Heart left ventricle (tissue), 16 donors: ENCODE measurements at regions of chr13 and their contacts with region 1.

Region 1: DNA sequence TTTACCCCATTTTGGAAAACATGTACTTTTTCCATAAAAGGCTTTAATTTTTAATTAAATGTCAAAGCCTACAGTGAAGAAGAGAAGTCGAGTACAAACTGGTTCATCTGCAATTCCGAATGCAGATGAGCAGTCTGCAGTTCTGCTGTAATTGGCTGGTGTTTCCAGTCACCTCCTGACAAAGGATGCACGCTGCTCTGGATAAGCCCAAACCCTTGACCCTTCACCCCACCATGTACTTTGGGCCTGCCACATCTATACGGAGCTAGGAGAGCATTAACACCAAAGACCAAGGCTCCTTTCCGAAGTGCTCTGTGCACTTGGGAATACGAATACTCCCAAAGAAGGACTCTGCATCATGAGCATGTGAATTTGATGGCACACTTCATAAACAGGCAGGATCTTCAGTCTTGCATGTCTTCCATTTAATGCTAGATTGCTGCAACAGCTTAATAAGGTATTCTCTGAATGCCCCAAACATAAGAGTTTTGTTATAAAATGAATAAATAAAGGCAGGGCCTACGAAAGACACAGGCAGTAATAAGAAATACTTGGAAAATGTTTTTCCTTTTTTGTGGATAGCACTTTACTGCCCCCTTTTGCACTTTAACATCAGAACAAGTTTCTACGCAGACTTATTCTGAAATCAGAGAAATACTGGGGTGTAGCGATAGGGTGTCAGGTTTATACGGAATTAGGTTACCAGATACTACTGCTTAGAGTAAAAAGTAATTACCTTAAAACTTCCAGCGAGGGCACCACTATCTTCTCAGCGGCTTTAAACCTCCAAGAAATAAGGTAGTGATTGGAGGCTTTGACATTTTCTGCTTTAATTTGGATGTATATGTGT is 15.0 kb downstream of the EFNB2 start:
- DNase-seq: no peak
- ATAC-seq: no peak
- H3K4me3 ChIP-seq: no peak overlapping the region
- H3K27ac ChIP-seq: no peak overlapping the region
- H3K4me1 ChIP-seq: peaks cover 0 to 52% (median 9%) of the 10 kb centered on the region in 12 donors
- H3K27me3 ChIP-seq: no peaks in the 10 kb centered on the region
- CTCF ChIP-seq: peak in 10 of 12 donors; percentile 35 to 64 (median 46)
- POLR2A ChIP-seq: no peak

Region 2: GRCh38 chr13:104571161-104571892 is 1949.1 kb before region 1 on chr13:
- intact Hi-C with region 1: loop called in 1 of 10 experiments (anchors 10 kb)
- DNase-seq: peak in 4 of 5 donors; percentile 44 to 62 (median 59)
- ATAC-seq: peak; percentile 64 to 87 (median 82)
- H3K4me3 ChIP-seq: peak overlapping the region in 1 of 12 donors; percentile 2
- H3K27ac ChIP-seq: no peak overlapping the region
- H3K4me1 ChIP-seq: peaks cover 0 to 9% (median 0%) of the 10 kb centered on the region in 12 donors
- H3K27me3 ChIP-seq: peaks cover 0 to 5% (median 0%) of the 10 kb centered on the region in 9 donors
- CTCF ChIP-seq: peak; percentile 38 to 79 (median 64)
- POLR2A ChIP-seq: no peak

Region 3: GRCh38 chr13:105410602-105411001 is 1109.8 kb before region 1 on chr13:
- intact Hi-C with region 1: loop called in 1 of 10 experiments (anchors 10 kb)
- DNase-seq: peak in 4 of 5 donors; percentile 29 to 64 (median 42)
- ATAC-seq: no peak
- H3K4me3 ChIP-seq: peak overlapping the region in 2 of 12 donors; percentile 8 to 20
- H3K27ac ChIP-seq: no peak overlapping the region
- H3K4me1 ChIP-seq: no peaks in the 10 kb centered on the region
- H3K27me3 ChIP-seq: no peaks in the 10 kb centered on the region
- CTCF ChIP-seq: peak; percentile 34 to 74 (median 53)
- POLR2A ChIP-seq: no peak

Region 4: GRCh38 chr13:106083620-106084350 is 436.6 kb before region 1 on chr13:
- intact Hi-C with region 1: loop called in 4 of 10 experiments (anchors 5 to 10 kb)
- DNase-seq: peak in 2 of 5 donors; percentile 17 to 23
- ATAC-seq: peak in 3 of 4 donors; percentile 33 to 63 (median 52)
- H3K4me3 ChIP-seq: no peak overlapping the region
- H3K27ac ChIP-seq: no peak overlapping the region
- H3K4me1 ChIP-seq: peaks cover 0 to 3% (median 0%) of the 10 kb centered on the region in 12 donors
- H3K27me3 ChIP-seq: no peaks in the 10 kb centered on the region
- CTCF ChIP-seq: peak; percentile 27 to 74 (median 56)
- POLR2A ChIP-seq: no peak

Region 5: DNA sequence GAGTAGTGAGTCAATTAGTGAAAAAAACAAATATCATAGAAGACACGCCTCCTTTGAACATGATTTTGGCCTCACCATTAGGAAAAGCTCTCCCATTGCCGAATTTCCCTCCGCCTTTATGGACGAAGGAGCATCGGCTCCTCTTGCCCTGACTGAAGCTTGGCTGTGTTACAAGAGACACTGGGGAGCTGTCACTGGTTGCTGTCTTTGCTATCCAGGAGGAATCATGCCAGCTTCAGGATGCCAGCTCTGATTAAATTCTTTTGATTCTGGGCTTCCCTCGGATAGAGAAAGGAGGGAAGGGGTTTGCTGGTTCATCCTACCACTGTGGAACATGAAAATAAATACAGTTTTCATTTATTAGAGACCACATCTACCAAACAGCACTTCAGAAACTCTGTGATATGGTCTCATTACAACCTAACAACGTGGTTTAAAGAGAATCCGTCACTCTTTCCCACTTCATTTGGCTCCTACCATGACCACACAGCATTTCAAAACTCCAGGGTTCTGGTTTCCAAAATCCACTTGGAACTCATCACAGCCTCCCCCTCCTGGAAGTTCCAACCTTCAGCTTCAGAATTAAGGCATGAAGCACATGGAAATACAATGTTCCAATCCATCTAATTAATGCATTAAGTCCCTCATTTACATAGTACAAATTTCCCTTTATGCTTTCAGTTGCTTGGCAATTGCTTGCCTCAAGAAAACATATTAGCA is 431.0 kb before region 1 on chr13:
- intact Hi-C with region 1: loop called in 4 of 10 experiments (anchors 5 to 10 kb)
- DNase-seq: no peak
- ATAC-seq: no peak
- H3K4me3 ChIP-seq: no peak overlapping the region
- H3K27ac ChIP-seq: no peak overlapping the region
- H3K4me1 ChIP-seq: no peaks in the 10 kb centered on the region
- H3K27me3 ChIP-seq: no peaks in the 10 kb centered on the region
- CTCF ChIP-seq: no peak
- POLR2A ChIP-seq: no peak

Region 6: DNA sequence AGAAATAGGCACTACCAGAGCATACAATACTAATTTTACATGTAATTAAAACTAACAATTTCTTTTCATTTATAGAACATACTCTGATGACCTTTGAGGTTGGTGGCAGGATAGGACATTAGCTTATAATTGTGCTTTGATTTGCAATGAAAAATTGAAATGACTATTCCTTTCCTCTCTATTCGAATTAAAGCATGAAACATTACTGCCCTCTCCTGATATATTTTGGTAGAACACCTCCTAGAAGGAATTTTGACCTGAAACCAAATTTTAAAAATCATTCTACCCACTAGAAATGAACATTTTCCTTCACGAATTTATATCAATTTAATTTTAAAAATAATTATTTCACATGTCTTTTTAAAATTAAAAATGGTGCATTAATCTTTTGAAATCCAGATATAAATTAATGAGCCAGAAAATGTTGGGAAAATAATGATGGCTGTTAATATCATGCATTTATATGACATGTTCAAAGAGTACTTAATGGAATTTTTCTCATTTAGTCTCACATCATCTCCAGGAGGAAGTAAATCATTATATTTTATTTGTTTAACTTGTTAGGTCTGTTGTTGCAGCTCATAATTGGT is 603.8 kb after region 1 on chr13:
- intact Hi-C with region 1: loop called in 1 of 10 experiments (anchors 10 kb)
- DNase-seq: no peak
- ATAC-seq: no peak
- H3K4me3 ChIP-seq: no peak overlapping the region
- H3K27ac ChIP-seq: no peak overlapping the region
- H3K4me1 ChIP-seq: peaks cover 0 to 5% (median 0%) of the 10 kb centered on the region in 12 donors
- H3K27me3 ChIP-seq: no peaks in the 10 kb centered on the region
- CTCF ChIP-seq: peak; percentile 40 to 80 (median 68)
- POLR2A ChIP-seq: no peak

Region 7: DNA sequence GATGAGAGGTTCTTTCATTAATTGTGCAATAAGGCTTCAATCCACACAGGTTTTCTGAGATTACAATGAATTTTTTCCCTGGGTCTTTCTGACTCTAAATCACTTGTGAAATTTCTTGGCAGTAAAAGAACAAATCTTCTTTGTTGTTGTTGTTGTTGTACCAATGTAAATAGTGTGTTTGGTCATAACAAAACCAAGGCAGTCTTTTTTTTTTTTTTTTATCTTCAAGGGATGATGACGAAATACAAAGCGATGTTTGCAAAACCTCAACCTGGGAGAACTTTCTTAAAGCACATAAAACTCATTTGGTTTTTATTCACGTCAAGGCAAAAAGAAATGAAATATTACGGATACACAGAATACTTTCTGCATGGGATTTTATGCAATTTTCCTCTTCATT is 1232.9 kb after region 1 on chr13:
- intact Hi-C with region 1: no loop called
- DNase-seq: no peak
- ATAC-seq: no peak
- H3K4me3 ChIP-seq: no peak overlapping the region
- H3K27ac ChIP-seq: no peak overlapping the region
- H3K4me1 ChIP-seq: no peaks in the 10 kb centered on the region
- H3K27me3 ChIP-seq: no peaks in the 10 kb centered on the region
- CTCF ChIP-seq: no peak
- POLR2A ChIP-seq: no peak